ENCODE measurements at regions of chr11 and their contacts with region 1.

Region 1: GRCh38 chr11:65382033-65382807 is at the start of gene SLC25A45:
- DNase-seq: peak; percentile 78 to 98 (median 92)

Region 2: DNA sequence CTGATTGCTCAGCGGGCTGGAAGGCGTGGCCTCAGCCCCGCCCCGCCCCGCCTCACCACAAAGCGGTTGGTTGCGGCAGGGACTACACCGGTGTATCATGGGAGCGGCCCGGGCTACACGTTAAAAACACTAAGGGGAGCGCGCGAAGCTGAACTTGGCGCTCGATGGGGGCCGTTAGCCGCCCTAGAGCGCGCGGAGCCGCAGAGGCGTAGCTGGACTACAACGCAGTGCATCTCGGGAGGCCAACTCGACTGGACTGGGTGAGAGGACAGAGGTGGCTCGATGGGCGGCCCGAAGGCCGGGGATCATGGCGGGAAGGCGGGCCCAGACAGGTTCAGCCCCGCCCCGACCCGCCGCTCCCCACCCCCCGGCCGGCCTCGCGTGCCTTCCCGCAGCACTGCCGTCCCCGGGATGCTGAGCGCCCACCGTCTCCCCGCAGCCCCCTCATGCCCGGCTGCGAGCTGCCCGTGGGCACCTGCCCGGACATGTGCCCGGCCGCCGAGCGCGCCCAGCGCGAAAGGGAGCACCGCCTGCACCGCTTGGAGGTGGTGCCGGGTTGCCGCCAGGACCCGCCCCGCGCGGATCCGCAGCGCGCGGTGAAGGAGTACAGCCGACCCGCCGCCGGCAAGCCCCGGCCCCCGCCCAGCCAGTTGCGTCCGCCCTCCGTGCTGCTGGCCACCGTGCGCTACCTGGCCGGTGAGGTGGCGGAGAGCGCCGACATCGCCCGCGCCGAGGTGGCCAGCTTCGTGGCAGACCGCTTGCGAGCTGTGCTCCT is 341.2 kb before region 1 on chr11 and contains the start of gene SAC3D1:
- intact Hi-C with region 1: no loop called
- DNase-seq: peak; percentile 72 to 96 (median 91)

Region 3: DNA sequence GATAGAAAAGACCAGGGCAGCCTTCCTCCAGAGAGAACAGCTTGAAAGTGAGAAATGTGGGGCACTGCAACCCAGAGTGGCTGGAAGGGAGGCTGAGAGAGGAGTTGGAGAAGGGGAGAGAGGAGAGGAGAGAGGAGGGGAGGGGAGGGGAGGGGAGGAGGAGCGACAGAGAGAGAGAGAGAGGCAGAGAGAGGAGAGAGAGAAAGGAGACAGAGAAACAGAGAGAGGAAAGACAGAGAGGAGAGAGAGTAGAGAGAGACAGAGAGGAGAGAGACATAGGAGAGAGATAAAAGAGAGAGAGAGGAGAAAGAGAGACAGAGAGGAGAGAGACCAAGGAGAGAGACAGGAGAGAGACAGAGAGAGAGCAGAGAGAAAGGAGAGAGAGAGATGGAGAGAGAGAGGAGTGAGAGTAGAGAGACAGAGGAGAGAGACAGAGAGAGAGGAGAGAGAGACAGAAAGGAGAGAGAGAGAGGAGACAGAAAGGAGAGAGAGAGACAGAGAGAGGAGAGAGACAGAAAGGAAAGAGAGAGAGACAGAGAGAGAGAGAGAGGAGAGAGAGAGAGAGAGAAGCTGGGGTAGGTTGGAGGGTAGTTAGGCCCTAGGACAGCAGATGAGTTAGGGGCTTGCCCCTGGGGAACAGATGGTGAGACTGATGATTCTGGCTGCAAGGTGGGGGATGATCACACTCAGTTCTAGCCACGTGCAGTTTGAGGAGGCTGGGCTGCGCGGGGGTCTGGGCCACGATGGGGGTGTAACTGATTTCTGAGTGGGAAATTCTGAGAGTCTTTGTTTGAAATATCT is 134.1 kb after region 1 on chr11:
- intact Hi-C with region 1: loop called (anchors 5 kb)
- DNase-seq: peak in 1 of 42 donors; percentile 17

Measured in head of caudate nucleus (tissue), 42 donors.